Spleen (tissue), 13 donors: ENCODE measurements at regions of chr2 and their contacts with region 1.

Region 1: DNA sequence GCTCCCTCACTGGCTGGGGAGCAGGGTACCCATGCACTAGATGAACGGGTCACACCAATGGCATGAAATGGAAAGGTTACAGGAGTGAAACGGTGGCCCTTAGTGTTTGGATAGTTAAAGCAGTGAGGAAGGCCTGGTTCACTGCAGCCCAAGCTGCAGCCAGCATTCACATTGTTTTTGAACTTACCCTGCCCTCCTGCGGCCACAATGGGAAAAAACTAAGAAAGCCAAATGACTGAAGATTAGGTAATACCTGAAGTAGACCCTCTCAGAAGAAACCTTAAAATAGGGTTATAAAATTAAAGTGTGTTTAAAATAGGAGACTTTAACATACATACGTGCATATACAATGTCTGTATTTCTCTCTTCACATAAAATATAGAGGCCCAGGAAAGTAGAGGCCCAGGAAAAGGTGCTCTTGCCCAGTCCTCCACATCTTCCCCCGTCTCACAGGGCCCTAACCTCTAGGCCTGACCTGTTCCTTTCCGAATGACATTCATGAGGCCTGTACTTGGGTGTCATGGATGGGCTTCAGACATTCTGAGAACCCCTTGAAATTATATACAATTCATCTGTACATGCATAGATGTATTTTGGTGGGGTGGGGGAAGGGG is 33.3 kb downstream of the DOK1 start:
- DNase-seq: no peak
- H3K4me3 ChIP-seq: no peak overlapping the region
- H3K27ac ChIP-seq: no peak overlapping the region
- H3K4me1 ChIP-seq: peaks cover 0 to 36% (median 17%) of the 10 kb centered on the region in 6 donors
- H3K27me3 ChIP-seq: peaks cover 0 to 15% (median 1%) of the 10 kb centered on the region in 7 donors
- CTCF ChIP-seq: peak; percentile 53 to 80 (median 74)
- POLR2A ChIP-seq: no peak

Region 2: GRCh38 chr2:74482801-74483674 is 104.7 kb before region 1 on chr2 and contains the starts of genes CCDC142 and TTC31:
- intact Hi-C with region 1: loop called (anchors 5 kb)
- DNase-seq: peak; percentile 98
- H3K4me3 ChIP-seq: peak within 1 kb of the TSS; percentile 72 to 96 (median 88)
- H3K27ac ChIP-seq: peak within 1 kb of the TSS; percentile 85 to 97 (median 94)
- H3K4me1 ChIP-seq: peaks cover 33 to 64% (median 40%) of the 10 kb centered on the region in 6 donors
- H3K27me3 ChIP-seq: no peaks in the 10 kb centered on the region
- CTCF ChIP-seq: peak; percentile 83 to 98 (median 94)
- POLR2A ChIP-seq: peak in 1 of 3 donors; percentile 55
- total RNA-seq, gene CCDC142: 22.2 to 59.4 (median 31.6) TPM
- total RNA-seq, gene TTC31: 34.3 to 51.3 (median 38.3) TPM

Region 3: GRCh38 chr2:74502720-74503505 is 84.9 kb before region 1 on chr2:
- intact Hi-C with region 1: loop called (anchors 5 kb)
- DNase-seq: peak; percentile 93
- H3K4me3 ChIP-seq: peak overlapping the region; percentile 41 to 90 (median 54)
- H3K27ac ChIP-seq: peak overlapping the region; percentile 41 to 86 (median 71)
- H3K4me1 ChIP-seq: peaks cover 35 to 84% (median 76%) of the 10 kb centered on the region in 6 donors
- H3K27me3 ChIP-seq: peaks cover 9 to 66% (median 39%) of the 10 kb centered on the region in 7 donors
- CTCF ChIP-seq: peak in 1 of 11 experiments; percentile 16
- POLR2A ChIP-seq: peak in 1 of 3 donors; percentile 17